Activated CD4-positive, alpha-beta memory T cell treated with anti-CD3 and anti-CD28 coated beads for 36 hours (primary cell): ENCODE measurements at regions of chr17 and their contacts with region 1.

Region 1: DNA sequence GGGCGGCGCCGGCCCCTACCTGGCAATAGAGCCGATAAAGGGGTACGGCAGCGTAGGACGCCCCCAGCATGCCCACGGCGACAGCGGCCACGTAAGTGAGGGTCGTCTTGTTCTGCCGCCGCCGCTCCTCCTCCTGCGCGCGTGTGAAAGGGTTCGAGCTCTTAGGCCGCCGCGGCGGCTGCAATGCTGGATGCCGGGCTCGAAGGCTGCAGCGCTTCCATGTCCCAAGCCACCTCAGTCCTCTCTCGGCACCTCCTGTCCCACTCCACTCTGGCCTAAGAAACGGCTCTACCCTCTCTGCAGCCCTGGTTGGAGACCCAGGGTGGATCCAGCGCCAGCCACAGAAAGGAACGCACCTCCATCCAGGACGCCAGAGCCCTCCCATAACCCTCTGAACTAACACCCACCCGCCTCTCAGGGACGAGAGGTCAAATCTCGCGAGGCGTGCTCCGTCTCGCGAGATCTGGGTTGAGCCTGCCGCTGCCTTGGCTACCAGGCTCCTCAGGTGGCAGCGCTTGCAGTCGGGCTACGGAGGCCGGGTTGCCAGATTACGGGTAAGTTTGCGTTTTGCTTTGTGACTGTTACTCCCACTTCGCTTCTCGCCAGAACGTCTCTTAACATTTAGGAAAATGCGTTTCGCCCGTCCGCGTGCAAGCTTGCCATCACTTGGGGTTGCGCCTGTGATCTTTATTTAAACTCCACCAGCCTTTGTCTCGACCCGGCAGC is at the starts of genes COX11 and STXBP4:
- DNase-seq: peak; percentile 97
- H3K4me3 Mint-ChIP-seq: no peak within 1 kb of the TSS
- H3K27ac Mint-ChIP-seq: no peak within 1 kb of the TSS
- H3K4me1 Mint-ChIP-seq: peaks cover 23% of the 10 kb centered on the region
- H3K27me3 Mint-ChIP-seq: no peaks in the 10 kb centered on the region
- total RNA-seq, gene COX11: 44.2 to 49.9 TPM
- total RNA-seq, gene STXBP4: 3.2 to 4.3 TPM

Region 2: DNA sequence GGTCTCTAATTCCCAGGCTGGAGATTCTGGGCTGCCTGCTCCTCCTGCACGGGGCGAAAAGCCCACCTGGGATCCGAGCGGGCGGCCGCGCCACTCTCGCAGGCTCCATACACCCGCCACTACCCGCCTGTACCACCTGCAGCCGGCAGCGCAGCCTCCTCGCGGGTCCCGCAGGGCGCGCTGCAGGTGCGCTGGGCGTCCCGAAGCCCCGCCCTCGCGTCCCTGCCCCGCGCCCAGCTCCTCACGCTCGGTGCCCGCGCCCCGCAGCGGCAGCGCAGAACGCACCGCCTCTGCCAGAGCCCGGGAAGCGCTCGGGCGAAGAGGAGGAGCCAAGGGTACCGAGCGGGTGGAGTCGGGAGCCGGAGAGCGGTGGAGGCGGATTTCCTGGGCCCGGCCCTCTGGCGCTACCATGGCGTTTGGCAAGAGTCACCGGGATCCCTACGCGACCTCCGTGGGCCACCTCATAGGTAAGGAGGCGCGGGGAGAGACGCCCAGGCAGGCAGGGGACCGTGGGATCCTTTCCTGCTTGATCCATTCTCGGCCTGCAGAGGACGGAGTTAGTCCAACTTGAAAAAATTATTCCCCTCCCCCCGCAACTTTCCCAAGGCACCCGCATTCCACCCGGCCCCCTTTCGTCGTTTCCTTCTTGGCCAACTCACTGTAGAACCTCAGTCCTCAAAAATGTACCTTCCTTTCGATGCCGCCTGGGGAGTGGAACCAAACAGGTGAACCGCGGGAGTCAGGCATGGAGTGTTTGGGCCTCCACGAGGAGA is 67.8 kb before region 1 on chr17 and contains the start of gene TOM1L1:
- CTCF ChIA-PET with region 1: no interaction called
- POLR2A ChIA-PET with region 1: no interaction called
- intact Hi-C with region 1: loop called (anchors 5 kb)
- DNase-seq: peak; percentile 50
- H3K4me3 Mint-ChIP-seq: peak within 1 kb of the TSS; percentile 52
- H3K27ac Mint-ChIP-seq: no peak within 1 kb of the TSS
- H3K4me1 Mint-ChIP-seq: peaks cover 8% of the 10 kb centered on the region
- H3K27me3 Mint-ChIP-seq: peaks cover 22% of the 10 kb centered on the region
- total RNA-seq, gene TOM1L1: 2.0 to 2.6 TPM

Region 3: GRCh38 chr17:55090079-55090492 is 121.7 kb after region 1 on chr17:
- CTCF ChIA-PET with region 1: no interaction called
- POLR2A ChIA-PET with region 1: no interaction called
- intact Hi-C with region 1: loop called (anchors 1 kb)
- DNase-seq: peak; percentile 76
- H3K4me3 Mint-ChIP-seq: no peak overlapping the region
- H3K27ac Mint-ChIP-seq: peak overlapping the region; percentile 80
- H3K4me1 Mint-ChIP-seq: peaks cover 26% of the 10 kb centered on the region
- H3K27me3 Mint-ChIP-seq: no peaks in the 10 kb centered on the region

Region 4: GRCh38 chr17:55264645-55265298 is 296.3 kb after region 1 on chr17 and contains the start of gene HLF:
- CTCF ChIA-PET with region 1: no interaction called
- POLR2A ChIA-PET with region 1: no interaction called
- intact Hi-C with region 1: loop called (anchors 2 kb)
- DNase-seq: peak; percentile 81
- H3K4me3 Mint-ChIP-seq: peak within 1 kb of the TSS; percentile 62
- H3K27ac Mint-ChIP-seq: no peak within 1 kb of the TSS
- H3K4me1 Mint-ChIP-seq: peaks cover 15% of the 10 kb centered on the region
- H3K27me3 Mint-ChIP-seq: peaks cover 18% of the 10 kb centered on the region
- total RNA-seq, gene HLF: 3.4 to 3.5 TPM

Region 5: GRCh38 chr17:55341432-55341831 is 373.0 kb after region 1 on chr17:
- CTCF ChIA-PET with region 1: no interaction called
- POLR2A ChIA-PET with region 1: no interaction called
- intact Hi-C with region 1: loop called (anchors 2 kb)
- DNase-seq: peak; percentile 30
- H3K4me3 Mint-ChIP-seq: no peak overlapping the region
- H3K27ac Mint-ChIP-seq: no peak overlapping the region
- H3K4me1 Mint-ChIP-seq: peaks cover 46% of the 10 kb centered on the region
- H3K27me3 Mint-ChIP-seq: peaks cover 25% of the 10 kb centered on the region